GM13976 (cell line): ENCODE measurements at regions of chr2 and their contacts with region 1.

Region 1: DNA sequence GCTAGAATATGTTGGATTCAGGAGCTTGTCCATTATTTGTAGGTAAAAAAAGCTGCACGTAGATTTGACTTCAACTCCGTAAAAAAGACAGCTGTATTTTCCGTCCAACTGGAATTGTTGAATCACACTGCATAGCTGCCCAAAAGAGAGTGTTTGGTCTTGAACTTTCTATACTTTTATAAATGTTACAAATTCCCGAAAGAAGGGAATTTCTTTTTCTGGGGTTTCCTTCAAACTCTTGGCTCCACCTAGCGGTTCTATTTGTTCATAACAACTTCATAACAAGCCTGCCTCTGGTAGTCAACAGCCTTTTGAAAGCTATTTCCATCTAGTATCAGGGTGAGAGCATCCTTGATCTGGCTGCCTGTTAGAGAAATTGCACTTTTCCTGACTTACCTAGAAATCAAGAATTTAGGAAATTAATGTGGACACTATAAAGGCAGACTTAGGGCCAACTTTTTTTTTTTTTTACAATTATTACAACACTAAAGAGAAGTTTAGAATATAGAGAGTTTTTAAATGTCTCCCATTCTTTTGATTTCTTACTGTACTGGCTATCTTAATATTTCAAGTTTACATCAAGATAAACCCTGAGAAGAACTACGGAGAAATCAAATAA is 48.1 kb downstream of the TMEM185B start:
- DNase-seq: peak; percentile 54
- CTCF ChIP-seq: peak; percentile 52

Region 2: DNA sequence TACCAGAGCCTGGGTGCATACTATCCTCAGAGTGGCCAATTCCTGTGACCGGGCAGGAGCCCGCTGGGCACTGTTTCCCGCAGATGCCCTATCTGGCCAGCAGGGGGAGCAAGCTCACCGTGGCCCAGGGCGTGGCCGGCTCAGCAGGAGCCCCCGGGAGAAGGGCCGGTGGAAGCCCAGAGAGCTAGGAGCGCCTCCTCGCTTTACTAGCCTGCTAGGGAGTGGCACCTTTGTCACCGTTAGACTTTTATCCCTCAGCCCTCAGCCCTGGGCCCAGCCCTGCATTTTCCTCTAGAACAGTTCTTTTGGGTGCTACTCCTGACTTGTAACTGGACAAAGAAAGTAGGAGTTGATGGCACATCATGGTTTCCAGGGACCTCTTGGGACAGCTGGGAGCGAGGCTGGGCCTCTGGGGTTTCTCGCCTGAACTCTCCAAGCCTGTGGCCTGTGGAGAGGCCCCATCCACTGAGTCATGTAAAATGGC is 472.1 kb before region 1 on chr2:
- in situ Hi-C with region 1: loop called (anchors 10 kb)
- DNase-seq: peak; percentile 84
- CTCF ChIP-seq: peak; percentile 92

Region 3: GRCh38 chr2:119753041-119753929 is 421.8 kb before region 1 on chr2:
- in situ Hi-C with region 1: loop called (anchors 5 kb)
- DNase-seq: peak; percentile 60
- CTCF ChIP-seq: peak; percentile 63